ENCODE measurements at regions of chr22 and their contacts with region 1.

Region 1: DNA sequence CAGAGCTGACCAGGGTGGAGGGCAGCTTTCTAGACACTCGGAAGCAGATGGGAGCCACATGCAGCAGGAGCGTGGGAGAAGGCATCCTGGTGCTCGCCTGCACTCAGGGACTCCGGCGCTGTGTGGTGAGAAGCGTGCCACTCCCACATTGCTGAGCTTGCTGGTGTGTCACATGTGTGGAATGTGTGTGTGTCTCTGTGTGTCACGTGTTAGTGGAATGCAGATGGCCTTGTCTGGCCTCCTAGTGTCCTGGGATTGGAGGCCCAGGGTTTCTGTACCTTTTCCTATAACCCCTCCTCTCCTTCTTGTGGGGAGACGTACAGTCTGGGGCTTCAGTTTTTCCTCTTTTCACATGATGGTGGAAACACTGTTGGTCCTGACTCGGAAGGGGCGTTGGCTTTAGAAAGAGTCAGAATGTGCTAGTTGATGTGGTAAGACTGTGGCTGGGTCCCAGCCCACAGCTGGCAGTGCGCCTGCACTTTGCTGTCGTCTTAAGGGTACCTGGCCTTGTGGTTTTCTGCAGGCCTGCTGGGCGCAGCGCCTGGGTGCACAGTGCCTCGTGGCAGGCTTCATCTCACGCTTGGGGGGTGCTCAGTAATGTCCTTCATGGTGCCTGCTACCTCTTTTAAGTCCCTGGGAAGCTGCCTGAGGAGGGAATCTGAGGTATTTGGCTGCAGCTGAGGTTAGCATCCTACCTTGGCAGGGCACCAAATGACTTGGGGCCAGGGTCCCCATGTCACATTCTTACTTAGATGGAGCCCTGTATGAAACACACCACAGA is 61.8 kb downstream of the MED15 start:
- DNase-seq: peak; percentile 86
- H3K4me3 Mint-ChIP-seq: no peak overlapping the region
- H3K27ac Mint-ChIP-seq: peak overlapping the region; percentile 72
- H3K4me1 Mint-ChIP-seq: peaks cover 75% of the 10 kb centered on the region
- H3K27me3 Mint-ChIP-seq: no peaks in the 10 kb centered on the region

Region 2: GRCh38 chr22:20514658-20515406 is 54.3 kb before region 1 on chr22:
- CTCF ChIA-PET with region 1: interaction called, 41 read pairs
- POLR2A ChIA-PET with region 1: no interaction called
- intact Hi-C with region 1: no loop called
- DNase-seq: peak; percentile 29
- H3K4me3 Mint-ChIP-seq: no peak overlapping the region
- H3K27ac Mint-ChIP-seq: no peak overlapping the region
- H3K4me1 Mint-ChIP-seq: peaks cover 78% of the 10 kb centered on the region
- H3K27me3 Mint-ChIP-seq: no peaks in the 10 kb centered on the region

Region 3: DNA sequence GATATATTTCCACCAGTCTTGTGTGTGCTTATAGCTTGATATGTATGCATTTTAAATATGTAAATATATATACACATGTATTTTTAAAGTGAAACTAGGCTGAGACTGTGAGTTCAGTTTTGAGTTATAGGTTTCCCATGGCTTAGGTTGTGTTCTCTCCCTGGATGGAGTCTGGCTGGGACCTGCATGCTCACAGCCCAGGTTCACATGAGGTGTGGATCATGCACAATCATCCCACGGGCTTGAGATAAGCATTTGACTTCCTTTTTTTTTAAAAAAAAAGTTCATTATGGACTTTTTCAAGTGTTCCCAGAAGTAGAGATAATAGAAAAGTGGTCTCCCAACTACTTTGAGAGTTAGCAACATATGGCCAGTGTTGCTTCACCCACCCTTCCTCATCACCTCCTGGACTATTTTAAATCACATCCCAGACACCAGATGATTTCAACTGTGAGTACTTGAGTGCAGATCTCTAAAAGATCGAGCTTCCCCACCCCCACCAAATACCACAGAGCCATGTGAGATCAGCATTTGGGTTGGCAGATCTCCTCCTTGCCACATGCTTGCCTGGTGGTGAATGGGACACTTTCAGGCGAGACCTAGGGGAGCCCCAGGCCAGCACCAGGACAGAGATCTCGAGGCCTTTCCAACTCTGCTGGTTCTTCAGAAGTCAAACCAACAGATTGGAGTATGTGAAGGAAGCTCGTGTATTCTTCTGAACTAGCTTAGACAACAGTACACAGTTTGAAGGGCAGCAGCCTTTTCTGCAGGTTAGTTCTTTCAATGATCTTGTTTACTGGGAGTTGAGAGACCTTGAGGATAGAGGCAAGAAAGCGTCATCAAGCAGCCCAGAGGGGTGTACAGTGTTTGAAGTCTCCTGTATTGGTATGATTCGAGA is 45.8 kb before region 1 on chr22:
- CTCF ChIA-PET with region 1: interaction called, 21 read pairs
- POLR2A ChIA-PET with region 1: interaction called, 3 read pairs
- intact Hi-C with region 1: no loop called
- DNase-seq: peak; percentile 57
- H3K4me3 Mint-ChIP-seq: no peak overlapping the region
- H3K27ac Mint-ChIP-seq: peak overlapping the region; percentile 75
- H3K4me1 Mint-ChIP-seq: peaks cover 73% of the 10 kb centered on the region
- H3K27me3 Mint-ChIP-seq: no peaks in the 10 kb centered on the region

Region 4: DNA sequence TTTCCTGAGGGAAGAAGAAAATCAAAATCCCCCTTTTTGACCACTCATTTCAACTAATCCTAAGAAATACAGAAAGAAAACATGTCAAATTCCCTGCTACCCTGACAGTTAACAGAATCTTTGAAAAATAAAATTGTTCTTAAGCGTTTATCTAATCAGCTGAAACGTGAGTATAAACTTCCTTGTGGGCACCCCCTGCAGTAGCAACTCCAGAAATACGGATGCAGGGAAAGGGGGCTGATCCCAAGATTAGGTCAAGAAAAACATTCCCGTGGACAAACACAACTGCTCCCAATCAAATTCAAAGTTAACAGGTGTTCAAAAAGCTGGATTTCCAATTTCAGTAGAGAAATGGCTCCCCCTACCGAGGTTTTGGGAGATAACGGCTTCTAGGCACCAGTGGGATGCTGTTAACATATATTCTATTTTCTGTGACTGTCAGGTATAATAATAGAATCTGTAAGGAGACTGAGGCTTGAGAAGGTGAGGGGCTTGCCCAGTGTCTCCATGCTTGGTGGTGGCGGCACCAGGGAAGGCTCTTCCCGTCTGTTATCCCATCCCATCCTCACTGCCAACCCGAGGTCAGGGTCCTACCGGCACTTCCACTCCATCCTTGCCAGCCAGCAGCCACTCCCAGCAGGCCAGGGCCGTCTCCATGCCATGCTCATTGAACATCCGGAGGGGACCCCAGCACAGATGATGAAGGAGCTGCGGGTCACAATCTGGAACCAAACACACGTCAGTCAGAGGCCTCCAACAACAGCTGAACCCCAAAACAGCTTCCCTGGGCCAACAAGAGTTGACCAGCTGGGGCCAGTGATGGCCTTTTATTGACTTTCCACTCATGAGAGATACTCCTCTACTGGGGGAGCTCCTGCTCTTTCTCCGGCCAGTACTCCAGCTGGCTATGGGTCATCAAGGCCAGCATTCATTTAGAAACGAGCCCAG is 172.7 kb after region 1 on chr22:
- CTCF ChIA-PET with region 1: interaction called, 24 read pairs
- POLR2A ChIA-PET with region 1: no interaction called
- intact Hi-C with region 1: no loop called
- DNase-seq: peak; percentile 50
- H3K4me3 Mint-ChIP-seq: no peak overlapping the region
- H3K27ac Mint-ChIP-seq: no peak overlapping the region
- H3K4me1 Mint-ChIP-seq: no peaks in the 10 kb centered on the region
- H3K27me3 Mint-ChIP-seq: no peaks in the 10 kb centered on the region

Measured in activated CD4-positive, alpha-beta memory T cell treated with anti-CD3 and anti-CD28 coated beads for 36 hours (primary cell).